Endothelial cell of umbilical vein (primary cell): ENCODE measurements at regions of chr15 and their contacts with region 1.

Region 1: GRCh38 chr15:58182460-58183163 is 44.4 kb downstream of the AQP9 start:
- DNase-seq: peak; percentile 76
- H3K4me3 ChIP-seq: no peak overlapping the region
- H3K27ac ChIP-seq: no peak overlapping the region
- H3K4me1 ChIP-seq: peaks cover 20% of the 10 kb centered on the region
- H3K27me3 ChIP-seq: no peaks in the 10 kb centered on the region
- CTCF ChIP-seq: peak; percentile 83 to 93
- POLR2A ChIP-seq: no peak

Region 2: GRCh38 chr15:57751177-57751800 is 431.3 kb before region 1 on chr15:
- CTCF ChIA-PET with region 1: interaction called, 17 read pairs
- POLR2A ChIA-PET with region 1: no interaction called
- dilution Hi-C with region 1: no loop called
- intact Hi-C with region 1: loop called (anchors 1 kb)
- DNase-seq: peak; percentile 72
- H3K4me3 ChIP-seq: no peak overlapping the region
- H3K27ac ChIP-seq: no peak overlapping the region
- H3K4me1 ChIP-seq: no peaks in the 10 kb centered on the region
- H3K27me3 ChIP-seq: no peaks in the 10 kb centered on the region
- CTCF ChIP-seq: peak; percentile 53 to 67
- POLR2A ChIP-seq: no peak

Region 3: DNA sequence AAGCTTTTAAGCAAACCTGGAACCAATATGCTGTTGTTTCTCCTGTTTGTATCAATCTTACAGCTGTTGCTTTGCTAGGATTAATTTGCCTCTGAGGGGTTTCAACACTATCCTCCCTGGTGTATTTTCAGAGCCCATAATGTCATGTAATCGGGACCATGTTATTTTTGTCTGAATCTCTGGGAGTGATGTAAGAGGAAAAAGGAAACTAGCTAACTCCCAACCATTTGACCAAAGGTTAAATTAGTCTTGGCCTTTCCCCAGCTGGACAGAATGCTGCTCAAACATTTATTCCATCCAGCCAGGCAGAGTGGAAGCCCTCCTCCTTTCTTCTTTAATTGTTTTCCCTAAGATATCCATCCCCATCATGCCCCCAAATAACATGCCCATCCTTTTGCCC is 259.3 kb before region 1 on chr15:
- CTCF ChIA-PET with region 1: no interaction called
- POLR2A ChIA-PET with region 1: no interaction called
- dilution Hi-C with region 1: no loop called
- intact Hi-C with region 1: loop called (anchors 1 kb)
- DNase-seq: peak; percentile 90
- H3K4me3 ChIP-seq: peak overlapping the region in 1 of 3 experiments; percentile 39
- H3K27ac ChIP-seq: peak overlapping the region; percentile 63
- H3K4me1 ChIP-seq: peaks cover 39% of the 10 kb centered on the region
- H3K27me3 ChIP-seq: no peaks in the 10 kb centered on the region
- CTCF ChIP-seq: no peak
- POLR2A ChIP-seq: no peak

Region 4: DNA sequence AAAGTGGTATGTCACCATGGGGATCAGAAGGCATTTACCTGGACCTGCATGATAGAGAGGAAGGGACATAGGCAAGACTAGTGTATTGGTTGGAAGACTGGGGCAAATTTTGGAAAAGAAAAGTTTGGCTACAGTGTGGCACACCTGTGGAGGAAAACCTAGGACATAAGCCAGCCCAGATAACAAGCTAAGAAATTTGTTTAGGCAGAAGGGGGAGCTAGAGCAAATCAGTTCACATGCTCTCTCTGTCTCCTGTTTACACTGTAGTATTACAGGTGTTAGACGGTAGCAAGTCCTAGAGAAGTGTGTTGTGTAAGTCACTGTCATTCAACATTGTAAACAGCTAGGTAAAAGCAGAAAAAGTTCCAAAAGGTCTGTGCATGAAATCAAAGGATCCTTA is 105.2 kb before region 1 on chr15:
- CTCF ChIA-PET with region 1: interaction called, 71 read pairs
- POLR2A ChIA-PET with region 1: no interaction called
- dilution Hi-C with region 1: no loop called
- intact Hi-C with region 1: loop called (anchors 1 kb)
- DNase-seq: peak; percentile 35
- H3K4me3 ChIP-seq: no peak overlapping the region
- H3K27ac ChIP-seq: no peak overlapping the region
- H3K4me1 ChIP-seq: no peaks in the 10 kb centered on the region
- H3K27me3 ChIP-seq: no peaks in the 10 kb centered on the region
- CTCF ChIP-seq: peak in 1 of 2 donors; percentile 33
- POLR2A ChIP-seq: no peak

Region 5: DNA sequence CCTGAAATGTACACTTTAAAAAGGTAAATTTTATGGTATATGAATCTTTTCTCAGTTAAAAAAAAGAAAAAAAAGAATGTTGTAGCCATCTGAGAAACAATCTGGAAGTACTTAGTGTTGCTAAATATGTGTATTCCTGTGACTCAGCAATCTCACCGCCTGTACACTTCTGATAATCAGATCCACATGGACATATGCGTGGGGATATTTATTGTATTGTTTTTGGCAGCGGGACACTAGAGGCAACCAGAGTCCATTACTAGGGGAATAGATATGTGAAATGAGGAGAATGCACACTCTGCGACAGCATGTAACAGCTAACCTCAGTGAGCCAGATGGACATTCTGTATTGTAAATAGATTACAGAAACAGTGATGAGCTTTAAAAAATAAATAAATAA is 20.9 kb after region 1 on chr15:
- CTCF ChIA-PET with region 1: no interaction called
- POLR2A ChIA-PET with region 1: no interaction called
- dilution Hi-C with region 1: no loop called
- intact Hi-C with region 1: loop called (anchors 1 kb)
- DNase-seq: peak; percentile 93
- H3K4me3 ChIP-seq: no peak overlapping the region
- H3K27ac ChIP-seq: peak overlapping the region; percentile 49
- H3K4me1 ChIP-seq: peaks cover 24% of the 10 kb centered on the region
- H3K27me3 ChIP-seq: no peaks in the 10 kb centered on the region
- CTCF ChIP-seq: no peak
- POLR2A ChIP-seq: no peak